Gastrocnemius medialis (tissue), 4 donors: ENCODE measurements at regions of chr9 and their contacts with region 1.

Region 1: GRCh38 chr9:93095205-93096130 is 549 bp upstream of the CARD19 start:
- DNase-seq: peak; percentile 99 to 100
- ATAC-seq: peak; percentile 57 to 64
- H3K4me3 ChIP-seq: peak overlapping the region; percentile 67 to 96 (median 86)
- H3K27ac ChIP-seq: peak overlapping the region; percentile 91 to 100 (median 100)
- H3K4me1 ChIP-seq: peaks cover 35 to 43% of the 10 kb centered on the region in 2 donors
- H3K27me3 ChIP-seq: no peaks in the 10 kb centered on the region
- CTCF ChIP-seq: no peak
- POLR2A ChIP-seq: peak; percentile 80 to 88

Region 2: DNA sequence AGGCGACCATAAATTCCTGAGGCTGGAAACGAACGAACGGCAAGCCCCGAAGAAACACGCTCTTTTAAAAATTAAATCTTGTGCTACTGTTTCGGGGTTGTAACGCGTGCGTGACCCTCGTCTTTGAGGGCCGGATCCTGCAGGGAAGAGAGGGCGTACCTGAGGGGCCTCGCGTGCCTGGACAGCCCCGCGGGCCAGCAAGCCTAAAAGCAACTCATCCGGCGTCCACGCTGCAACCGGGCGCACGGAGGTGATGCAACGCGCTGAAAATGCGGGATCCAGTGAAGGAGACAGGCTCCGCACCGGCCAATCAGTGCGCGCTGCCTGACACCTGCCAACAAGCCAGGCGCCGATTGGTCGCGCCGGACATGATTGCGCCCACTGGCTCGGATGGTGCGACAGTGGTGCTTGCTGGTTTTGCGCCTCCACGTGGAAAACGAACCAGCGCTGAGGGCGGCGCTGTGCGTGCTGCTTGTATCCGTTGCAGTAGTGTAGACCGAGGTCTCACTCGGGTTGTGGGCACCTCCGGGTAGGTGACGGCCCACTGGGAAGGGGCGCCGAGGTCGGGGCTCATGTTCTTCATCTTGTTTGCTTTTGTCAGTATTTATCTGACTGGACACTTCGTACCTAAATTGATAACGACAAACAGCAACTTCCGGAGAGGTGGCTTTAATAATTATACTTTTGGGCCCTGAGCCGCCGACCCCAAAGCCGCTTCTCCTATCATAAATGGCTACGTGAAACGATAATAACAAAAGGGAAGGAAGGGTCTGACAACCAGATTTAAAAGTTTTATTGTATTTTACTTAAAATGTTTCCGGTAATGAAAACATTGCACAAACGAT is 801.8 kb before region 1 on chr9 and contains the start of gene IARS1:
- in situ Hi-C with region 1: no loop called
- intact Hi-C with region 1: loop called (anchors 2 kb)
- DNase-seq: peak; percentile 97 to 99
- ATAC-seq: peak; percentile 93 to 94
- H3K4me3 ChIP-seq: peak within 1 kb of the TSS; percentile 71 to 88 (median 79)
- H3K27ac ChIP-seq: peak within 1 kb of the TSS; percentile 81 to 91 (median 88)
- H3K4me1 ChIP-seq: peaks cover 25 to 26% of the 10 kb centered on the region in 2 donors
- H3K27me3 ChIP-seq: no peaks in the 10 kb centered on the region
- CTCF ChIP-seq: peak in 3 of 5 experiments; percentile 23 to 36 (median 27)
- POLR2A ChIP-seq: peak; percentile 72 to 87
- total RNA-seq, gene IARS1: 87.0 to 111 (median 100) TPM

Region 3: DNA sequence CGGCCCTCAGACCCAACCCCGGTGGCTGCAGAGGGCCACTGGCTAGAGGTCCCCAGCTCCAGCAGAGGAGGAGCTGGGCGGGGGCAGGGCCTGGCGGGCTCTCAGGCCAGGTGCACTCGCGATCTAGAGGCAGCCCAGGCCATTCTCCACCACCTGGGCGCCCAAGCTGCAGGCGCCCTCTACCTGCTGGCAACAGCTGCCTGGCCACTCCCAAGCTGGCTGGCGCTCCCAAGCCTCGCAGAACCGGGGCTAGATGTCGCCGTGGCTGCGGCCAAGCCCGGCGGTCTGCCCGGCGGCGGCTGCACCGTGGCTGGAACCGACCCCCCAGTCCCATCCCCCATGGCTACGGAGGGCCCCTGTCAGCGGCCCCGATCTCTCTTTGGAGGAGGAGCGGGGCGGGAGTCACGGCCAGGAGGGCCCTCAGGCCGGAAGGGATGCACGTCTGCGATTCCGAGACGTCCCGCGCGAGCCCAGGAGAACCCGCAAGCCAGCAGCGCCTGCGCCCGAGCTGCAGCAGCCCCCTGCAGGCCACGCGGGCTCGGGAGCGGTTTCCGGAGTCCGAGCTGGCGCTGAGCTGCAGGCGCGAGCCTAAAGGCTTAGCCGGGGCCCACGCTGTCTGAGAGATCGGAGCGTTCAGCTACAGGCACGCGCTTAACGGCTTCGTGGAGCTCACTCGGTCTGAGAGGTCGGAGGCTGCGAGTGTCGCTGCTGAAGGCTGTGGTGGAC is 286.6 kb before region 1 on chr9:
- in situ Hi-C with region 1: no loop called
- intact Hi-C with region 1: no loop called
- DNase-seq: no peak
- ATAC-seq: peak; percentile 54 to 55
- H3K4me3 ChIP-seq: peak overlapping the region in 3 of 4 donors; percentile 1 to 45 (median 30)
- H3K27ac ChIP-seq: no peak overlapping the region
- H3K4me1 ChIP-seq: peaks cover 16 to 30% of the 10 kb centered on the region in 2 donors
- H3K27me3 ChIP-seq: peaks cover 71 to 94% (median 87%) of the 10 kb centered on the region in 3 donors
- CTCF ChIP-seq: no peak
- POLR2A ChIP-seq: no peak

Region 4: DNA sequence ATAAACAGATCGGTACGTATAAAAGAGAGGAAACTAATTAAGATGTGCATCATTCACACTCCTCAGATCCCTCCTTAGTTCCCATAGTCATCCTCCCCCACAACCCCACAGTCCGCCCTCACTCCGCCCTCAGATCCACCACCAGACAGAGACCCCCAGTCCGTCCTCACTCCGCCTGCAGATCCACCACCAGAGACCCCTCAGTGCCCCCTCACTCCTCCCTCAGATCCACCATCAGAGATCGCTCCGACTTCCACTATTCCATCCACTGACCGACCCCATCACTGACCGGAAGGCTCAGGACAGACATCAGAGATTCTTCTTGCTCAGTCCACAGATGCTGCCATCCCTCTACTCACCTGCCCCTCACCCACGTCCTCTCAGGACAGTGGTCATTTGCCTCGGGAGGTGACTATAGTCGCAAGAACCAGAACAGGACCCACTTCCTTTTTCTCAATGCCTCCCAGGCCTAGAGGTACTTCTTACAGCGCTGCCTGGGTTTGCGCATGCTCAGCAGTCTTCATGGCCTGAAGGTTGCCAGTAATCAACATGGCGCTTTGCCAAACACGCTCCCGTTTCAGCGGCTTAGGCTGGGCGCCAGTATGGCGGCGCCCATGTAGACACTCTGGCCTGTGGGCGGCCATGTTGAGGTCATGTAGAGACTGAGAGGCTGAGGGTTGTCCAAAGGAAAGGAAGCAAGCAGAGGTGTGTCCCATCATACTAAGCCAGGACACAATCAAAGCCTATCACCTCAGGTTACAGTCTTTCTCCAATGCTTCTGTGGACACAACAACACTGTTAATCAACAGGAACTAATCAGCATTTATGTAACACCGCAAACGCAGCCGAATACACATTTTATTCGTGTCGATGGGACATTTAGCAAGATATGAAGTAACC is 217.7 kb before region 1 on chr9 and contains the start of gene ZNF484:
- in situ Hi-C with region 1: no loop called
- intact Hi-C with region 1: loop called (anchors 10 kb)
- DNase-seq: peak; percentile 90 to 96
- ATAC-seq: peak; percentile 100
- H3K4me3 ChIP-seq: peak within 1 kb of the TSS; percentile 66 to 79 (median 73)
- H3K27ac ChIP-seq: peak within 1 kb of the TSS; percentile 80 to 87 (median 81)
- H3K4me1 ChIP-seq: peaks cover 9 to 14% of the 10 kb centered on the region in 2 donors
- H3K27me3 ChIP-seq: no peaks in the 10 kb centered on the region
- CTCF ChIP-seq: no peak
- POLR2A ChIP-seq: no peak
- total RNA-seq, gene ZNF484: 2.8 to 7.3 (median 4.1) TPM

Region 5: DNA sequence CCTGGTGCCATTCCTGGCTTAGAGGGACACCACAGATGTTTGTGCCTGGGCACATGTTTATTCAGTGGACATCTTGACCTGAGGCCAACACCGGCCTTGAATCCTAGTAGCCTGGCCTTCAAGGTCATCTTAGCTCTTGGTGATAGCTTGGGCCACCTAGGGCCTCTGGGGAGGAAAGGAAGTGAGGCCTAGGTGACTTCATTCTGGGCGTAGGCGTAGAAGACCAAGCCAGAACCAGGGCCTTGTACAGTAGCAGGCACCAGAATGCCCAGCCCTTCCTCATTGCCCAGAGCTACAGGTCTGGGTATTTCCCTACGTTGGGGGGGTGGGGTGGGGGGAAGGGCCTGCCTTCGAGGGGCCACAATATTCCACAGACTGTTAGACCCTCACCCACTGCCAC is 122.2 kb after region 1 on chr9:
- in situ Hi-C with region 1: no loop called
- intact Hi-C with region 1: loop called (anchors 5 kb)
- DNase-seq: peak; percentile 67 to 89
- ATAC-seq: peak; percentile 62 to 66
- H3K4me3 ChIP-seq: no peak overlapping the region
- H3K27ac ChIP-seq: peak overlapping the region; percentile 97 to 99 (median 98)
- H3K4me1 ChIP-seq: peaks cover 46 to 49% of the 10 kb centered on the region in 2 donors
- H3K27me3 ChIP-seq: no peaks in the 10 kb centered on the region
- CTCF ChIP-seq: no peak
- POLR2A ChIP-seq: no peak

Region 6: DNA sequence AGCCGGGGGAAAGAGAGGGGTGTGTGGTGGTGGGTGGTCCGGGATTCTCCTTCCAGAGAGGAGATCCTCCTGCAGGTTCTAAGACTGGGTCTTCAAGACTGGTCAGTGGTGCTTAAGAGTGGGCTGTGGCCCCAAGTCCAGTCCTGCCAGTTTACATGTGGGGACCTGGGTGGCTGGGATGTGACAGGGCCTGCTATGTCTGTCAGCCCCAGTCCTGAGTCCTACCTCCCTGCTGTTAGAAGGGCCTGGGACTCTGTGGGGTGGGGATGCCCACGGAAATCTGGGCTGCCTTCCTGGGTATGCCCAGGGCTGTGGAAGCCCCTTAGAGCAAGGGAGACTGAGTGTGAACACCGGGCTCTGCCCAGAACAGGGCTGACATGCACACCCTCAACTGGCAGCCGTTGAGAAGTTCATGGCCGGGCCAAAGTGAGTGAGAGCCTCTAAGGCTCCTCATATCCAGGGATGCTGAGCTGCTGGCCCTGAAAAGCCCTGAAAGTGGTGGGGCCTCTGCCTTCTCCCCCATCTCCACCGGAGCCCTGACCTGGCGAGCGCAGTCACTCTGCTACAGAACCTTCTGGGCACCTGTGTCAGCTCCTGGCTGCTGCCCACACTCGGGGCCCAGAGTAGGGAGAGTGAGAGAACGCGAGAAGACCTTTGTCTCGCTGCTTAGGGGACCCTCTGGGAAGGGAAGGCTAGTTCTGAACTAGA is 482.7 kb after region 1 on chr9:
- in situ Hi-C with region 1: no loop called
- intact Hi-C with region 1: loop called (anchors 1 kb)
- DNase-seq: no peak
- ATAC-seq: no peak
- H3K4me3 ChIP-seq: peak overlapping the region; percentile 58 to 75 (median 70)
- H3K27ac ChIP-seq: peak overlapping the region; percentile 76 to 85 (median 82)
- H3K4me1 ChIP-seq: peaks cover 58 to 59% of the 10 kb centered on the region in 2 donors
- H3K27me3 ChIP-seq: no peaks in the 10 kb centered on the region
- CTCF ChIP-seq: no peak
- POLR2A ChIP-seq: no peak